Heart right ventricle (tissue), 16 donors: ENCODE measurements at regions of chr4 and their contacts with region 1.

Region 1: DNA sequence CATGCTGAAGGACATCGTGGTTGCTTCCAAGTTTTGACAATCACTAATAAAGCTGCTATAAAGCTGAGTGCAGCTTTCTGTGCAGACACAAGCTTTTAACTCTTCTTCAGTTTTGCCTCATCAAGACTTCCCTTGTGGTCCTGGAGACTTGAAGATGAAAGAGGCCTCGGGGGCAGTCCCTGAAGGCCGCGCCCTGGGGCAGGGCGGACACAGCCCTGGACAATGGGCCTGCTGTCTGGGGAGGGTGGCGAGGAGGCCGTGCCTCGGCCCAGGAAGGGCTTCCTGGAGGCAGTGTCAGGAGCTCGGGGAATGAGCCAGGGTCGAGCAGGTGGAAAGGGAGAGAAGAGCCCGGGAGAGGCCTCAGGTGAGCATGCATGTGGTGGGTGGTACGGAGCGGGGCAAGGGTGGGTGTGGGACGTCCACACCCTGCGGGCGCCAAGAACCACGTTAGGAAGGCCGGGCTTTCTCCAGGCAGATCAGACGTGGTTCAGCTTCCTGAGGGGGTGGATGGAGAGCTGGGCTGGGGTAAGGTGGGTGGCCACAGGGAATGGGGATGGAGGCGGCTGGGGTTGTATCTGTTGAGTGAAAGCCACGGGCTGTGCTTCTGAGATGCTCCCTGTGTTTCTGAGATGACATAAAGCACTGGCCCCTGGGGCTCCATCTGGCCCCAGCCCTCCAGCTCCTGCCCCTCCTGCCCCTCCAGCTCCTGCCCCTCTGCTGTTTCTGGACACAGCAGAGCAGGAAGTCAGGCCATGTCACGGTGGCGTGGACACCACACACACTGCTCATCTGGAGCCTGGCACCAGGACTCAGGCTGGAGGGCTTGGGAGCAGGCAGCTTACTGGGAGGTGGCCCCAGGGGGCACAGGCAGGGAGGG is 21.5 kb downstream of the ADRA2C start:
- DNase-seq: no peak
- ATAC-seq: no peak
- H3K4me3 ChIP-seq: no peak overlapping the region
- H3K27ac ChIP-seq: no peak overlapping the region
- H3K4me1 ChIP-seq: no peaks in the 10 kb centered on the region
- H3K27me3 ChIP-seq: peaks cover 0 to 62% (median 17%) of the 10 kb centered on the region in 7 donors
- CTCF ChIP-seq: no peak

Region 2: GRCh38 chr4:3480528-3481112 is 307.1 kb before region 1 on chr4:
- intact Hi-C with region 1: no loop called
- DNase-seq: peak; percentile 62 to 78
- ATAC-seq: peak in 7 of 8 donors; percentile 1 to 48 (median 22)
- H3K4me3 ChIP-seq: no peak overlapping the region
- H3K27ac ChIP-seq: peak overlapping the region in 9 of 10 donors; percentile 15 to 100 (median 69)
- H3K4me1 ChIP-seq: peaks cover 15 to 60% (median 37%) of the 10 kb centered on the region in 9 donors
- H3K27me3 ChIP-seq: peaks cover 0 to 48% (median 35%) of the 10 kb centered on the region in 7 donors
- CTCF ChIP-seq: peak; percentile 96 to 100 (median 98)

Region 3: DNA sequence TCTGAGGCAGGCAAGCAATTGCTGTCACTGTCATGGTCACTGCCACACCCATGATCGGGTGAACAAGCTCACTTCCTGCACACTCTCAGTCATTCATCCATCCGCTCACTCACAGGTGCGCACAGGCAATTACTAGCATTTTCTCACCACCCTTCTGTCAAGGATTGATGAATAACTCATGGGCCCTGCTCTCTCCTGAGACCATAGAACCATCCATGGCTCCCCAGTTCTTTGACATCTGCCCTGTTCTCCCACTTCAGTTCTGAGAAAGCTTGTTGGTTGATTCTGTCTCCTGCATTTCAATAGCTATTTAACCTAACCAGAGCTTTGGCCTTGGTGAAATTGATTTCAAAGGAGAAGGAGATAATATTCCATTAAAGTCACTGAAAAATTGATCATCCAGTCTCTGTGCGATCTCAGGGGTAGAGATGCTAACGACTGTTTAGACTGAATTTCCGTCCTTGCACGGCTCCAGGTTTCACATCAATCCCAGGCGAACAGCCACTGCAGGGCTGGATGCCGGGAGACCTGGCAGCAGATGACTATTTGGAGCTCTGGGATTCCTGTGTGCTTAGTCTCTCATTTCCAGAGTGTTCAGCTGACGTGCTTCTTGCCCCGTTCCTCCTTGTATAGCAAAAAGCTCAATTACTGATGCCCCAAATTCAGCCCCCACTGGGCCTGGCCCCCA is 58.4 kb before region 1 on chr4:
- intact Hi-C with region 1: no loop called
- DNase-seq: no peak
- ATAC-seq: peak in 4 of 8 donors; percentile 27 to 46 (median 32)
- H3K4me3 ChIP-seq: no peak overlapping the region
- H3K27ac ChIP-seq: no peak overlapping the region
- H3K4me1 ChIP-seq: peaks cover 0 to 8% (median 0%) of the 10 kb centered on the region in 9 donors
- H3K27me3 ChIP-seq: peaks cover 10 to 77% (median 51%) of the 10 kb centered on the region in 7 donors
- CTCF ChIP-seq: no peak

Region 4: GRCh38 chr4:3740256-3740655 is 47.5 kb before region 1 on chr4:
- intact Hi-C with region 1: no loop called
- DNase-seq: no peak
- ATAC-seq: no peak
- H3K4me3 ChIP-seq: no peak overlapping the region
- H3K27ac ChIP-seq: no peak overlapping the region
- H3K4me1 ChIP-seq: peaks cover 0 to 6% (median under 1%) of the 10 kb centered on the region in 9 donors
- H3K27me3 ChIP-seq: peaks cover 22 to 93% (median 62%) of the 10 kb centered on the region in 7 donors
- CTCF ChIP-seq: no peak

Region 5: DNA sequence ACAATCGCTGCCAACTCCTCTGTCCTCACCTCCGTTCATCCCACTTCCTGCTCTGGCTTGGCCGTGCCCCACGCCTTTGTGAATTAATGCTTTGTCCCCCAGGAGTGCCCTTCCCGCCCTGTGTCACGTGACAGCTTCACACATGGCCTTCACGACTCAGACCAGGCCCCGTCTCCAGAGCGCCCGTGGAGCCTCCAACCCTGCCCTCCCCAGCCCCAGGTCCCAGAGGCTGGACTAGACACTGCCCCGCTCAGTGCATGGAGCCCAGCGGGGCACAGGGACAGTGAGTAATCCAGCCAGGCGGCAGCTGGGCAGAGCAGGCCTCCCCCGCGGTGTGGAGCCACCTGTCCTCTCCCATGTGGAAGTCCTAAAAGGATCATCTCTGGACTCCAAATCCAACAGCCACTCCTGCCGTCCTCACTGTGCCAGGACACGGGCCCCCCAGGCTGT is 14.2 kb before region 1 on chr4:
- intact Hi-C with region 1: loop called in 1 of 10 experiments (anchors 1 kb)
- DNase-seq: no peak
- ATAC-seq: peak in 1 of 8 donors; percentile 12
- H3K4me3 ChIP-seq: no peak overlapping the region
- H3K27ac ChIP-seq: no peak overlapping the region
- H3K4me1 ChIP-seq: no peaks in the 10 kb centered on the region
- H3K27me3 ChIP-seq: peaks cover 0 to 74% (median 58%) of the 10 kb centered on the region in 7 donors
- CTCF ChIP-seq: no peak

Region 6: DNA sequence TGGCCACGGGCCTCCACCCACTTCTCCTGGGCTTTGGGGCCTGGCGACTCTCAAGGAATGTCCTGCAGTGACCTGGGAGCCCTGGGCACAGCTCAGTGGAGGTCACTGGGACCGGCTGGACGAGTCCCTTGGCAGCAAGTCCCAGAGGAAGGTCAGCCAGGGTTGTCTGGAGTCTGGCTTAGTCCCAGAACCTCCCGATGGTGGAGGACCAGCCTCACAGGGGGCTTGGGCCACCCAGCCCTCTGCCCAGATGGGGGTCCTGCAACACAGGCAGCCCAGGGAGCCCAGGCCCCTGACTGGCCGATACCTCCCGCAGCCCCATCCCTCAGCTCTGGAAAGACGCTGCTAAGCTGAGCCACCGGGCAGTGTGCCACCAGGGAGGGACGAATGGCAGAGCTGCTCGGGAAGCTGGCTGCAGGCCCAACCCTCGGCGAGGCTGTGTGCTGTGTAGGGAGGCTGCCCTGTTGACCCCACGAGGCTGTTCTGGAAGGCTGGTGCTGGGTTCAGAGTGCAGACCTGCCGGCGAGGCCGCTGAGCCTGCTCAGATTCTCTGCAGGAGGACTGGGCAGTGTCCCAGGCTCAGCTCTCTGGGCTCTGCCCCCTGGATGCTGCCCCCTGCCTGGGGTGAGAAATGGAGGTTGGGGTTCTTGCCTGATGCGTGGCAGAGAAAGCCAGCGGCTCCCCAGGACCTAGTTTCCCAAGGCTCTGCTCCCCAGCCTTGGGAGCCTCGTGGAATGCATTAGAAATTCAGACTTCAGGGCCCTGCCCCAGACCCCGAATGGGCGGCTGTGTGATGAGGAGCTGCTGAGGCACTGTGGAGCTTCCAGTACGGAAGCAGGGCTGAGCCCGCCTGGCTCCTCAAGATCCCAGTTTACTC is 40.1 kb after region 1 on chr4:
- intact Hi-C with region 1: no loop called
- DNase-seq: peak; percentile 84 to 88
- ATAC-seq: peak; percentile 81 to 98 (median 94)
- H3K4me3 ChIP-seq: peak overlapping the region in 3 of 10 donors; percentile 9 to 33 (median 14)
- H3K27ac ChIP-seq: peak overlapping the region in 7 of 10 donors; percentile 36 to 79 (median 58)
- H3K4me1 ChIP-seq: peaks cover 0 to 16% (median 8%) of the 10 kb centered on the region in 9 donors
- H3K27me3 ChIP-seq: peaks cover 0 to 10% (median 0%) of the 10 kb centered on the region in 7 donors
- CTCF ChIP-seq: no peak